Activated B cell treated with CpG ODN at 0.5 μM for 24 hours (primary cell): ENCODE measurements at regions of chr7 and their contacts with region 1.

Region 1: GRCh38 chr7:66204822-66205740 is at the start of gene TPST1:
- DNase-seq: peak; percentile 92
- ATAC-seq: peak; percentile 93
- H3K4me3 Mint-ChIP-seq: peak within 1 kb of the TSS; percentile 94
- H3K27ac Mint-ChIP-seq: peak within 1 kb of the TSS; percentile 85
- H3K4me1 Mint-ChIP-seq: peaks cover 43% of the 10 kb centered on the region
- H3K27me3 Mint-ChIP-seq: peaks cover 11% of the 10 kb centered on the region
- CTCF ChIP-seq: no peak
- total RNA-seq, gene TPST1: 5.6 and 6.5 TPM in 2 replicates

Region 2: DNA sequence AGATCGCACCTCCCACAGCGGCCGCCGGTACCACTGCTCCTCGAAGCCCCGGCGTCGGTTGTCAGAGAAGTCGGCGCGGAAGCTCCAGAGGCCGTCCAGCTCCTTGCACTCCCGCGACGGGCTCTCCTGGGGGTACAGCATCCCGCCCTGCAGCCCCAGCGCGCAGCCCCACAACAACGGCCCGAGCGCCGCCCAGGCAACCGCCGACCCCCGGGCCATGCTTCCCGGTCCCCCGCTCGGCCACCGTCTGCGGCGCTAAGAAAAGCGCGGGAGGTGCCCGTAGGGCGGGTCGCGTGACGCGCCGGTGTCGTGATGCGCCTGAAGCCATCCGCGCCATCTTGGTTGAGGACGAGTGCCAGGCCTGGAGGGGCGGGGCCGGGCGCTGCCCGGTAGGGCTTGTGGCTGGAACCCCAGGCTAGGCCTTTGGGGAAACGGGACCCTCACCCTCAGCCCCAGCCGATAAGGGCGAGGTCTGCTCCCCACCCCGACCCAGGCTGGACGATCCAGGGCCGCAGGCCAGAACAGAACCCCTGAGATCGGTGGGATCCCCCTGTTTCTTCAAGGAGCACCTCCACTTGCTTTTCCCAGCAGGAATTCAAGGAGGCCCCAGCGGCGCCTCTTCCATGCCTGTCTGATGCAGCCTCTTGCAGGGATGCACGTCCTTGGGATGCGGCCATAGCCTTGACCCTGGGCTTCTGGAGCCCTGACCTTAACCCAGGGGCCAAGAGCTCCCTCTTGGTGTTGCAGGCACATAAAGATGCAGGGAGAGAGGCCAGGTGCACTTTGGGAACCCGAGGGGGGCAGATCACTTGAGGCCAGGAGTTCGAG is 222.9 kb before region 1 on chr7 and contains the start of gene GUSB:
- CTCF ChIA-PET with region 1: no interaction called
- POLR2A ChIA-PET with region 1: no interaction called
- intact Hi-C with region 1: loop called (anchors 1 kb)
- DNase-seq: peak; percentile 85
- ATAC-seq: peak; percentile 94
- H3K4me3 Mint-ChIP-seq: peak within 1 kb of the TSS; percentile 79
- H3K27ac Mint-ChIP-seq: peak within 1 kb of the TSS; percentile 46
- H3K4me1 Mint-ChIP-seq: peaks cover 19% of the 10 kb centered on the region
- H3K27me3 Mint-ChIP-seq: no peaks in the 10 kb centered on the region
- CTCF ChIP-seq: no peak
- total RNA-seq, gene GUSB: 33.6 and 40.8 TPM in 2 replicates

Region 3: DNA sequence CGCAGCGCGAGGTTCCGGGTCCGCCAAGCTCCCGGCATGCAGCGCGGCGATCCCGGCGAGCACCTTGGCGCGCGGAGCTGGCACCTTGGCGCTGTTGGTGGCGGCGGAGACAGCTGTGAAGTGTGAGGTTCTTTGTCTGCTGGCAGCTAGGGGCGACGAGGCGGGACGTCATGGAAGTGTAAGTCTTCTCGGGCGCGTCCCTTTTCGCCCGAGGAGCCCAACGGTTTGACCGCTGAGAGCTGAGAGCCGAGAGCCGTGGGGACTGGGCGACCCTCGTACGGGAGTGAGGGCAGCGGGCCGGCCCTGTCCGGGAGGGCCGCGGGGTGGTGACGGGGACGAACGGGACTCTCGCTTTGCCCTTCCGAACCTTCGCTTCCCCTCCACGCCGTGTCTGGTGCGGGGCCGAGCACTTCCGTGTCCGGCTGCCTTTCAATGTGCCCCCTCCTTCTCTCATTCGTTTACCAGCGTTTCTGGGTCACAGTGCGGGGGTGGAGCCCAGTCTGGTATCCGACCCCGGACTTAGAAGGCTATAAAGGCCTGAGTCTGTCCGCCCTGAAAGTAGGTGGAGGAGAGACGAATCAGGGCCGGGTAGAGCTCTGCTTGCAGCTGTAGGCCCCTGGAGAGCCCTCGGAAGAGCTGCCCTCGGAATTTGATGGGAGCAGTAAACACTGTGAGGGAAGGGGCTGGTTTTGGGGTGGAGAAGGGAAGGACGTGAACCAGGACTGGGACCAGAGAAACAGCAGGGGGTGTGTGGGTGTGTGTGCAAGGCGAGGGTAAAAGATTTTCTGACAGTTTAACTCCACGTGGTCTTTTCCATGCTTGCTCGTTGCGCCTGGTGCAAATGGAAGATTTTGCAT is 90.1 kb before region 1 on chr7 and contains the start of gene CRCP:
- CTCF ChIA-PET with region 1: no interaction called
- POLR2A ChIA-PET with region 1: interaction called, 17 read pairs
- intact Hi-C with region 1: loop called (anchors 1 kb)
- DNase-seq: peak; percentile 85
- ATAC-seq: peak; percentile 91
- H3K4me3 Mint-ChIP-seq: peak within 1 kb of the TSS; percentile 95
- H3K27ac Mint-ChIP-seq: peak within 1 kb of the TSS; percentile 95
- H3K4me1 Mint-ChIP-seq: peaks cover 44% of the 10 kb centered on the region
- H3K27me3 Mint-ChIP-seq: no peaks in the 10 kb centered on the region
- CTCF ChIP-seq: no peak
- total RNA-seq, gene CRCP: 40.8 and 42.5 TPM in 2 replicates

Region 4: GRCh38 chr7:66413379-66414114 is 208.5 kb after region 1 on chr7:
- CTCF ChIA-PET with region 1: interaction called, 3 read pairs
- POLR2A ChIA-PET with region 1: interaction called, 4 read pairs
- intact Hi-C with region 1: loop called (anchors 2 kb)
- DNase-seq: peak; percentile 67
- ATAC-seq: peak; percentile 78
- H3K4me3 Mint-ChIP-seq: peak overlapping the region; percentile 80
- H3K27ac Mint-ChIP-seq: peak overlapping the region; percentile 41
- H3K4me1 Mint-ChIP-seq: peaks cover 13% of the 10 kb centered on the region
- H3K27me3 Mint-ChIP-seq: no peaks in the 10 kb centered on the region
- CTCF ChIP-seq: no peak

Region 5: DNA sequence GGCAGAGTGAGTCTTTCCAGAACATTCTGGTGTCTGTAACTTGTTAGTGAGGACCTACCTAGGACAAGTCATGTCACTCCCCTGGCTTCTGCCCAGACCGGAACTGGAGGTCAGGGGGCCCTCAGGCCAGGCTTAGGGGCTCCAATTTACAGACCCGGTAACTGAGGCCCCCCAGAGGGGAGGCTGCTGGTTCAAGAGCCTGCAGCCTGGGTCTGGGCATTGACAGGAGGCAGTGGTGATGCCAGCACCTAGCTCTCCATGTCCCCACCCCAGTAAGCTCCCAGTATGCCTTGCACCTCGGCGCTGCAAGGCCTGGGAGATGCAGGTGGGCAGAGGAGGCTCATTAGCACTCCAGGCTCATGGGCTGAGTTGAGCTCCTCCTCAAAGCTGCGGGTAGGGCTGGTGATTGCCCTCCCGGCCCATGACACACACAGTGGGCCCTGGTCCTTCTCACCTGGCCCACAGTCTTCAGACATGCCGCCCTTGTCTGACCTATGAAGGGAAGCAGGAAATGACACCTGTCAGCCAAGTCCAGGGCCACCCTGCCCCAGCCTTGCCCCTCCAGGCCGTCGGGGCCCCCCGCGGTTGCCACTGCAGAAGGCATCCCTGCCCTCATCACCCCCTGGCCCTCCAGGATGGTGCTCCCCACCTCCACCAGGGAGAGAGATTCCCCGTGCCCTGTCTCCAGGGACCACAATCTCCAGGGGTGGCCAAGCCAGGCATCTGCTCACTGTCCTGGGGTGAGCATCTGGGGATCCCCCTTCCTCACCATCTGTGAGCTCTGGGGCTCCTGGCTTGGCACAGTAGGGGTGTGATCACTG is 627.7 kb after region 1 on chr7:
- CTCF ChIA-PET with region 1: no interaction called
- POLR2A ChIA-PET with region 1: no interaction called
- intact Hi-C with region 1: no loop called
- DNase-seq: no peak
- ATAC-seq: no peak
- H3K4me3 Mint-ChIP-seq: no peak overlapping the region
- H3K27ac Mint-ChIP-seq: no peak overlapping the region
- H3K4me1 Mint-ChIP-seq: no peaks in the 10 kb centered on the region
- H3K27me3 Mint-ChIP-seq: no peaks in the 10 kb centered on the region
- CTCF ChIP-seq: no peak

Region 6: GRCh38 chr7:67302113-67303039 is 1097.3 kb after region 1 on chr7:
- CTCF ChIA-PET with region 1: no interaction called
- POLR2A ChIA-PET with region 1: no interaction called
- intact Hi-C with region 1: loop called (anchors 10 kb)
- DNase-seq: peak; percentile 95
- ATAC-seq: peak; percentile 86
- H3K4me3 Mint-ChIP-seq: peak overlapping the region; percentile 93
- H3K27ac Mint-ChIP-seq: peak overlapping the region; percentile 94
- H3K4me1 Mint-ChIP-seq: peaks cover 31% of the 10 kb centered on the region
- H3K27me3 Mint-ChIP-seq: no peaks in the 10 kb centered on the region
- CTCF ChIP-seq: no peak